ENCODE measurements at regions of chr19 and their contacts with region 1.

Region 1: GRCh38 chr19:47436712-47437401 is 17.5 kb upstream of the MEIS3 start:
- DNase-seq: peak; percentile 55
- H3K4me3 ChIP-seq: no peak overlapping the region
- H3K27ac ChIP-seq: no peak overlapping the region
- H3K4me1 ChIP-seq: no peaks in the 10 kb centered on the region
- H3K27me3 ChIP-seq: peaks cover 0 to 2% of the 10 kb centered on the region in 2 experiments
- CTCF ChIP-seq: peak; percentile 73 to 88
- POLR2A ChIP-seq: no peak

Region 2: DNA sequence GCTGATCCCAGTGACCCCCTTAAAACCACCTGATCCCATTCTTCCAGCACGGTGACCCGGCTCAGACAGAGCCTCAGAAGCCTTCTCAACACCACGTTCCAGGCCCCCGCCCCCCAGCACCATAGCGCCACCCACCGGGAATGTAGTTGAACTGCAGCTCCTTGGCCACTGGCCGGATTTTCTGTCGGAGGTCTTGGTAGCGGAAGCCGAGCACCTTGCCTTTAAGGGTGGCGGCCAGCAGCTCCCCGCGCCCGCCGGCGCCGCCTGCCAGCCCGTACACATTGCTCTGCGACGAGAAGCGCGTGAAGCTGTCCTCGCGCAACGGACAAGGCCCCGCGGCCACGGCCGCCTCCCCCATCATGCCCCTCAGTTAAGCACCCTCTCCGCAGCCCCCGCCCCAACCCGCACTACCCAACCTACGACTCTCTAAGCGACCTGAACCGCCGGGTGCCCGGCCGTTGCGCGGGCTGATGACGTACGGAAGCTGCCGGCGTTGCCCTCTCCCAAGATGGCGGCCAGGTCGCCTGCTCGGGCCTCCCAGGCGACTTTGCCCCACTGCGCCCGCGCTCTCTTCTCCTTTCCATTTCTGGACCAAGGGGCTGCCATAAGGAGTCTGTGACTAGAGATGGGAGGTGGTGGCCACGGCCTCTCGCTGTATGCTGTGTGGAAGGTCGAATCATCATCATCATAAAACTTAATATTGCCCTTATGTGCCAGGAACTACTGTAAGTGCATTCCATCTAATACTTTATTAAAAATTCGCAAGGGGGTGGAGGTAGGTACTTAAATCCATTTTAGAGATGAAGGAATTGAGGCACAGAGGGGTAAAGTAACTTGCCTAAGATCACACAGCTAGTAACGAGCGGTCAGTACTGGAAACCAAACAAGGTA is 47.2 kb after region 1 on chr19 and contains the start of gene KPTN:
- CTCF ChIA-PET with region 1: interaction called, 16 read pairs
- POLR2A ChIA-PET with region 1: no interaction called
- dilution Hi-C with region 1: no loop called
- intact Hi-C with region 1: no loop called
- DNase-seq: peak; percentile 91
- H3K4me3 ChIP-seq: peak within 1 kb of the TSS; percentile 71 to 77 (median 77)
- H3K27ac ChIP-seq: peak within 1 kb of the TSS; percentile 88
- H3K4me1 ChIP-seq: peaks cover 3% of the 10 kb centered on the region
- H3K27me3 ChIP-seq: no peaks in the 10 kb centered on the region
- CTCF ChIP-seq: peak; percentile 93 to 97
- POLR2A ChIP-seq: peak; percentile 75
- total RNA-seq, gene KPTN: 13.7 and 15.5 TPM in 2 replicates

Region 3: DNA sequence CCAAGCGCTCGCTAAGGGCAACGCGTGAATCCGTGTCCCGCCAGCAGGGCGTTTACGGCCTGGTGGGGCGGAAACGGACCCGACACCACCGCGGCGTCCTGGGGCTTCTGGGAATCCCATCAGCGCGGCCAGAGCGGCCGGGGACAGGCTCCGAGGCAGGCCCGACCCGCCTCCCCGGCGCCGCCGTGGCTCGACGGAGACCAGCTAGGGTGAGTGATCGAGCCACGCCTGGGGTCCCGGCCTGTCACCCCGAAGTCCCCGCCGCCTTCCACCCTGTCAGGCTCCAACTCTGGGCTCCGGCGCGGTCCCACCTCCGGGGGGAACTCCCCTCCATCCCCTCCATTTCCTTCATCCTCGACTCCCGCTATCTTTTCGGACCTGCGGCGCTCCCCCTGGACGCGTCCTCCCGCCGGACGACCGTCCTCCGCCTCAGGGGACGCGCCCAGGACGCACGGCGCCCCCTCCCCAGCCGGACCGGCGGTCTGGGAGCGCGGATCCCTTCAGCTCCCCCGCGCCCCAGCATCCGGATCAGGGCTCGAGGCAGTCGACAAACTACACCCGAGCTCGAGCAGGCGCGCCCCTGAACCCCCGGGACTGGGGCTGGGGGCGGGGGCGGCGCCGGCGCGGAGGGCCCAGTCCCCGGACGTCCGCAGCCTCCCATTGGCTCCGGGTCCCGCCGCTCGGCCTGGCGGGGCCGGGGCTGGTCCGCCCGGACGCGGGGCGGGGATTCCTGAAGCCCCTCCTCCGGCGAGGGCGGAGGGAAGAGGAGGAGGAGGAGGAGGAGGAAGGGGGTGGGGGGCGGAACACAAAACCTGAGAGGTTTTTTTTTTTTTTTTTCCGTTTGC is 171.4 kb after region 1 on chr19:
- CTCF ChIA-PET with region 1: interaction called, 9 read pairs
- POLR2A ChIA-PET with region 1: no interaction called
- dilution Hi-C with region 1: no loop called
- intact Hi-C with region 1: loop called (anchors 5 kb)
- DNase-seq: peak; percentile 90
- H3K4me3 ChIP-seq: peak overlapping the region; percentile 67 to 92 (median 91)
- H3K27ac ChIP-seq: peak overlapping the region; percentile 90
- H3K4me1 ChIP-seq: peaks cover 25% of the 10 kb centered on the region
- H3K27me3 ChIP-seq: no peaks in the 10 kb centered on the region
- CTCF ChIP-seq: peak; percentile 22 to 46
- POLR2A ChIP-seq: peak; percentile 64

Region 4: GRCh38 chr19:47707135-47707925 is 270.5 kb after region 1 on chr19:
- CTCF ChIA-PET with region 1: interaction called, 454 read pairs
- POLR2A ChIA-PET with region 1: no interaction called
- dilution Hi-C with region 1: no loop called
- intact Hi-C with region 1: loop called (anchors 1 kb)
- DNase-seq: peak; percentile 68
- H3K4me3 ChIP-seq: no peak overlapping the region
- H3K27ac ChIP-seq: no peak overlapping the region
- H3K4me1 ChIP-seq: no peaks in the 10 kb centered on the region
- H3K27me3 ChIP-seq: no peaks in the 10 kb centered on the region
- CTCF ChIP-seq: peak; percentile 80 to 93
- POLR2A ChIP-seq: no peak